ENCODE measurements at regions of chr11 and their contacts with region 1.

Region 1: DNA sequence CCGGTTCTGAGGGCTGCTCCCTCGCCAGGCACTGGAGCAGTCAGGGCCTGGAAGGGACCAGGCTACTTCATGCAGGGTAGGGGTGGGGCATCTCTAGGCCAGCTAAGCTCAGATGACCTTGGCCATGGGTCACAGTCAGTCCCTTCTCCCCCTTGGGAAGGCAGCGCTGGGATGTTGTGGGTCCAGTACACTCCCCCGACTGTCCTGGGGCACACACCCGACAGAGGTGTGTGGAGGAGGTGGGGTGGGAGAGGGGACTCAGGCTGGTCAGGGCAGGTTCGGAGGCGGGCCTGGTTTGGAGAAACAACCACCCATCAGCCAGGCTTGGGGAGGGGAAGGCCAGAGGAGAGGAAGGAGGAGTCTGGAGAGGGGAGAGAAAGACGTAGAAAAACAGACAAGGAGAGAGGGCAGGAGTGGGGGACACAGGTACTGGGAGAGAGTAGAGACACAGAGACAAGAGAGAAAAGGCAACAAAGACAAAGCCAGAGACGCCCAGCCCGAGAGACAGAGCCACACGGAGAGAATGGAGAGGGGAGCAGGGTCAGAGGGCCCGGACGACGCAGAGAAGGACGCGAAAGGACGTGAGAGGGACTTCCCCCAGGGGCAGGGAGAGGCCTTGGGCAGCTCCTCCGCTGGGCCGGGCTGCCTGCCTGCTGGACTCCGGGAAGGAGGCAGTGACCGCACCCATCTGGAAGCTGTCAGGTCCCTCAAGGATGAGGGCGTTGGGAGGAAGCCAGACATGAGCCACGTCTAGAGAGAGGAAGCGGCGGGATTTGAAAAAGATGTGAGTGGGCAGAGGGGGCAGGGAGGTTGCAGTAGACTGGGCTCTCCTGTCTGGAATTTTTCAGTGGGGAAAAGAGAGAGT is 30.6 kb upstream of the TSKU start:
- DNase-seq: peak in 1 of 2 experiments; percentile 73
- H3K4me3 ChIP-seq: no peak overlapping the region
- H3K27ac ChIP-seq: no peak overlapping the region
- H3K4me1 ChIP-seq: no peaks in the 10 kb centered on the region
- H3K27me3 ChIP-seq: no peaks in the 10 kb centered on the region
- CTCF ChIP-seq: no peak

Region 2: GRCh38 chr11:76788661-76789439 is 36.3 kb after region 1 on chr11:
- CTCF ChIA-PET with region 1: no interaction called
- POLR2A ChIA-PET with region 1: no interaction called
- intact Hi-C with region 1: loop called (anchors 5 kb)
- DNase-seq: peak; percentile 98 to 100
- H3K4me3 ChIP-seq: peak overlapping the region; percentile 94; the same call in 1 of the 2 replicates
- H3K27ac ChIP-seq: peak overlapping the region; percentile 85
- H3K4me1 ChIP-seq: peaks cover 85% of the 10 kb centered on the region
- H3K27me3 ChIP-seq: no peaks in the 10 kb centered on the region
- CTCF ChIP-seq: no peak

Region 3: DNA sequence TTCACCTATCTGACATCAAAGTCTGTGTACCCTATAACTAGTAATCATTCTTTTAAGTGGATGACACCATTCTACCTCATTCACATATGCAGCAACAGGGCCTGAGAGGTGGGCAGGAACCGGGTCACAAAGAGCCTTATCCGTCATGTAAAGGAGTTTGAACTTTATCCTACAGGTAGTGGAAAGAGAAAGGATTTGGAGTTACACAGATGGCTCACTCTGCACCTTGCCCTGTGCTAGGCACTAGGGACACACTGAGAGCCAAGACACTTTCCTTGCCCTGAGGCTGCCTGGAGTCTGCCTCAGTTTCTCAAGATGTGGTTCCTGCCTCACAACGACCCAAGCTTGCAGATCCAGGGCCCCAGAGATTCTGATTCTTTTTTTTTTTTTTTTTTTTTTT is 93.9 kb after region 1 on chr11:
- CTCF ChIA-PET with region 1: no interaction called
- POLR2A ChIA-PET with region 1: no interaction called
- intact Hi-C with region 1: no loop called
- DNase-seq: no peak
- H3K4me3 ChIP-seq: no peak overlapping the region
- H3K27ac ChIP-seq: no peak overlapping the region
- H3K4me1 ChIP-seq: no peaks in the 10 kb centered on the region
- H3K27me3 ChIP-seq: no peaks in the 10 kb centered on the region
- CTCF ChIP-seq: no peak

Region 4: GRCh38 chr11:76863196-76863777 is 110.7 kb after region 1 on chr11:
- CTCF ChIA-PET with region 1: no interaction called
- POLR2A ChIA-PET with region 1: no interaction called
- intact Hi-C with region 1: no loop called
- DNase-seq: no peak
- H3K4me3 ChIP-seq: no peak overlapping the region
- H3K27ac ChIP-seq: no peak overlapping the region
- H3K4me1 ChIP-seq: peaks cover 14% of the 10 kb centered on the region
- H3K27me3 ChIP-seq: no peaks in the 10 kb centered on the region
- CTCF ChIP-seq: no peak

Region 5: GRCh38 chr11:77073328-77074001 is 320.9 kb after region 1 on chr11:
- CTCF ChIA-PET with region 1: no interaction called
- POLR2A ChIA-PET with region 1: interaction called, 11 read pairs
- intact Hi-C with region 1: no loop called
- DNase-seq: peak; percentile 75 to 83
- H3K4me3 ChIP-seq: no peak overlapping the region
- H3K27ac ChIP-seq: peak overlapping the region; percentile 31
- H3K4me1 ChIP-seq: peaks cover 50% of the 10 kb centered on the region
- H3K27me3 ChIP-seq: no peaks in the 10 kb centered on the region
- CTCF ChIP-seq: no peak; the same call in 1 of the 2 replicates

Region 6: GRCh38 chr11:77340501-77340900 is 587.9 kb after region 1 on chr11:
- CTCF ChIA-PET with region 1: no interaction called
- POLR2A ChIA-PET with region 1: no interaction called
- intact Hi-C with region 1: no loop called
- DNase-seq: no peak
- H3K4me3 ChIP-seq: no peak overlapping the region
- H3K27ac ChIP-seq: no peak overlapping the region
- H3K4me1 ChIP-seq: no peaks in the 10 kb centered on the region
- H3K27me3 ChIP-seq: no peaks in the 10 kb centered on the region
- CTCF ChIP-seq: no peak

Measured in PC-9 (cell line).